ENCODE measurements at regions of chrX and their contacts with region 1.

Region 1: GRCh38 chrX:17374619-17375366 is at the start of gene NHS:
- DNase-seq: no peak
- H3K4me3 ChIP-seq: peak within 1 kb of the TSS; percentile 47 to 62
- H3K27ac ChIP-seq: peak within 1 kb of the TSS; percentile 55
- H3K4me1 ChIP-seq: no peaks in the 10 kb centered on the region
- H3K27me3 ChIP-seq: no peaks in the 10 kb centered on the region
- CTCF ChIP-seq: peak in 1 of 3 experiments; percentile 26
- POLR2A ChIP-seq: peak in 1 of 2 donors; percentile 36
- total RNA-seq, gene NHS: 8.3 TPM

Region 2: GRCh38 chrX:17488036-17488570 is 113.3 kb after region 1 on chrX:
- intact Hi-C with region 1: no loop called
- DNase-seq: no peak
- H3K4me3 ChIP-seq: no peak overlapping the region
- H3K27ac ChIP-seq: no peak overlapping the region
- H3K4me1 ChIP-seq: no peaks in the 10 kb centered on the region
- H3K27me3 ChIP-seq: no peaks in the 10 kb centered on the region
- CTCF ChIP-seq: no peak
- POLR2A ChIP-seq: no peak

Region 3: GRCh38 chrX:17521871-17522693 is 147.3 kb after region 1 on chrX:
- intact Hi-C with region 1: loop called (anchors 5 kb)
- DNase-seq: no peak
- H3K4me3 ChIP-seq: no peak overlapping the region
- H3K27ac ChIP-seq: no peak overlapping the region
- H3K4me1 ChIP-seq: no peaks in the 10 kb centered on the region
- H3K27me3 ChIP-seq: no peaks in the 10 kb centered on the region
- CTCF ChIP-seq: no peak
- POLR2A ChIP-seq: no peak

Measured in vagina (tissue), 2 donors.